Tibial artery (tissue), 4 donors: ENCODE measurements at regions of chr6 and their contacts with region 1.

Region 1: GRCh38 chr6:38056361-38056760 is 236.8 kb downstream of the ZFAND3 start:
- DNase-seq: no peak
- H3K4me3 ChIP-seq: no peak overlapping the region
- H3K27ac ChIP-seq: no peak overlapping the region
- H3K4me1 ChIP-seq: peaks cover 0 to 18% (median 4%) of the 10 kb centered on the region in 4 donors
- H3K27me3 ChIP-seq: no peaks in the 10 kb centered on the region
- CTCF ChIP-seq: no peak

Region 2: DNA sequence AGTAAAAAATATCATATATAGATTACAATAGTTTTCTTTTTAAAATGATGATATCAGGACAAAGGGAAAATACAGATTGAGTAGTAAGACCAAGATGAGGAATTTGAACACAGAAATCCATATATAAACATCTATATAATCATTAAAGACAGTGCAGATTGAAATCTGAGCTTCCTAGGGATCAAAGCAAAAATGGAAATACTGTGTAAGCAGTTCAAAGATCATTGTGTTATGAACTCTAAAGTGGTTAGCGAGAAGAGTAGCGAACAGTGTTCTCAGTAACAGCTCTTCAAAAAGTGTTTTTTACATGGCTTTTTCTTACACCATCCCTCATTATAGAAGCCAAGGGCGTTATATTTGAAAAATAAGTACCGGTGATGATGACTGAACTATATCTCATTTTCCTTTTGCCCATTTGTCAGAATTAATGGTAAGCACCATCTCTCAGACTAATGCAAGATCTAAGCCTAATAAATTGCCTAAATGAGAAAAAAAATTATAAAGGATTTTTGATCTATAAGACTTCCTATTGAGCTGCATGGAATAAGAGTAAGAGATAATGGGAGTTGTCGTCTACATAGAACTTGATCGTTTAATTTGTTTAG is 10.6 kb before region 1 on chr6:
- intact Hi-C with region 1: loop called (anchors 1 kb)
- DNase-seq: no peak
- H3K4me3 ChIP-seq: no peak overlapping the region
- H3K27ac ChIP-seq: no peak overlapping the region
- H3K4me1 ChIP-seq: peaks cover 0 to 23% (median 0%) of the 10 kb centered on the region in 4 donors
- H3K27me3 ChIP-seq: no peaks in the 10 kb centered on the region
- CTCF ChIP-seq: no peak

Region 3: DNA sequence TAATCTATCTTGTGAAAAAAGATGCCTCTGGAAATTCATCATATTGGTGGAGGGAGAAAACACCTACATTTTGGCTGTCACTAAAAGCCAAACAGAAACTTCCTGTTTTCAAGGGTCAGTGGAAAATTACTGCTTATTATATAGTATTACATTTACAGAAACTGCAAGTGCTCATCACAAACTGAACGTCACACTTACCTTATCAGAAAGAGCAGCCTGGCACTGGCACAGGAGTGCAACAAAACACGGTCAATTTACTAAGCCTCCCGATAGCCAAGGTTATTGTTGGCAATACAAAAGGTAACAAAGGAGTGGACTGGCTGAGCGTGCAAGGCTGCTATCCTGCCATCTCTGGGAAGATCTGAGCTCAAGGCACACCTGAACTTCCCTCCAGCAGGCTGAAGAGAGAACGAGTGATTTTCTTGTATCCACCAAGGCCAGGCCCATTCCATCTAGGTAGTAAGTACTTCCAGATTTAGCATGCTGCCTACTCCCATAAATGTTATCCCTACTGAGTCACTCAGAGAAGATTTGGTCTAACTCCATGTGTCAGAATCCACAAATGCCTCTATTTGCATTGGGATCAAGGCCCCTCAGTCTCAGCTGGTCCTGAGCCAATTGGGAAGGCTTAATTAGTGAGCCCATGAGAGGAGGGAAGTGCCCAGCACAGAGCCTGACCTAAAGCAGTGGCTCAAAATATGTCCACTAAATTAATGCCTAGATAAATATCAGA is 183.5 kb after region 1 on chr6:
- intact Hi-C with region 1: no loop called
- DNase-seq: no peak
- H3K4me3 ChIP-seq: no peak overlapping the region
- H3K27ac ChIP-seq: no peak overlapping the region
- H3K4me1 ChIP-seq: no peaks in the 10 kb centered on the region
- H3K27me3 ChIP-seq: no peaks in the 10 kb centered on the region
- CTCF ChIP-seq: no peak